ENCODE measurements at regions of chr1 and their contacts with region 1.

Region 1: DNA sequence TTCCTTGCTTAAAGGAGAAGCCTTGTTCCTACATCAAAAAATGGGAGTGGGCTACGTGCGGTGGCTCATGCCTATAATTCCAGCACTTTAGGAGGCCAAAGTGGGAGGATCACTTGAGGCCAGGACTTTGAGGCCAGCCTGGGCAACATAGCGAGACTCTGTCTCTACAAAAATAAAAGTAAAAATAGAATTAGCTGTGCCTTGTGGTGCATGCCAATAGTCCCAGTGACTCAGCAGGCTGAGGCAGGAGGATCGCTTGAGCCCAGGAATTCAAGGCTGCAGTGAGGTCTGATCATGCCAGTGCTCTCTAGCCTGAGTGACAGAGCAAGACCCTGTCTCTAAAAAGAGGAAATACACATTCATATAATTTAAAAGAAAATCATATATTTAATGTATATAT is 127.1 kb downstream of the C1orf21 start:
- DNase-seq: no peak
- ATAC-seq: peak in 6 of 8 donors; percentile 51 to 84 (median 59)
- H3K4me3 ChIP-seq: no peak overlapping the region
- H3K27ac ChIP-seq: peak overlapping the region in 4 of 10 donors; percentile 20 to 41 (median 26)
- H3K4me1 ChIP-seq: peaks cover 4 to 51% (median 42%) of the 10 kb centered on the region in 9 donors
- H3K27me3 ChIP-seq: no peaks in the 10 kb centered on the region
- CTCF ChIP-seq: no peak

Region 2: DNA sequence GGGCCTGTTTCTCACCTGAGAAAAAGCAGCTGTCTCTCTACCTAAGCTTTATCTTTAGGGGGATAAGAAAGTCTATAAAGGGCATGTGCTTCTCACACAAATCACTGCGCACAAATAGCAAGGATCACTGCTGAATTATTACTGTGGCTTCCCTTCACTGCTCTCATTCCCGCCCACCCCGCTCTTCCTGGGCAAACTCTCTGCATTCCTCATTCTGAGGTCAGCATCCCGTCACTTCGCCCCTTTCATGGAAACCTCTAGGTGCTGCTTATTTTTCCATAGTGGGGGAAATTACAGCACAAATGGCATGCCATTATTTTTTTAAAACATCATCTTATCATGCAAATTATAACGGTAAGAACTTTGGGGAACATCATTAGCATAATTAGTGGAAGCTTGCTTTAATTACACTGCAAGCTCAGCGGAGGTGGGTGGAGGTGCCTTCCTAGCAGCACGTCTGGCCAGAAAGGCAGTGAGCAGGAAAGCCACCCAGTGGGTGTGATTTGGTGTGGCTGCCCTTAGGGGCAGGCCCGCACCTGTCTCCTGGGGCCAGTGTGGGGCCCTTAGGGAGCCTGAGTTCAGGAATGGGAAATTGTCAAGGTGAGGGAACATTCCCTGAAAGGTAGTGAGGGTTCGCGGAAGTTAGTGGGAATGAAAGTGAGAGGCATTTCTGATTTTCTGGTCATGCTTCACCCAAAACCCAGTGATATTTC is 1222.0 kb before region 1 on chr1:
- intact Hi-C with region 1: loop called in 1 of 10 experiments (anchors 10 kb)
- DNase-seq: no peak
- ATAC-seq: peak in 3 of 8 donors; percentile 19 to 39 (median 32)
- H3K4me3 ChIP-seq: no peak overlapping the region
- H3K27ac ChIP-seq: peak overlapping the region in 8 of 10 donors; percentile 14 to 71 (median 55)
- H3K4me1 ChIP-seq: peaks cover 3 to 48% (median 26%) of the 10 kb centered on the region in 9 donors
- H3K27me3 ChIP-seq: no peaks in the 10 kb centered on the region
- CTCF ChIP-seq: no peak

Region 3: DNA sequence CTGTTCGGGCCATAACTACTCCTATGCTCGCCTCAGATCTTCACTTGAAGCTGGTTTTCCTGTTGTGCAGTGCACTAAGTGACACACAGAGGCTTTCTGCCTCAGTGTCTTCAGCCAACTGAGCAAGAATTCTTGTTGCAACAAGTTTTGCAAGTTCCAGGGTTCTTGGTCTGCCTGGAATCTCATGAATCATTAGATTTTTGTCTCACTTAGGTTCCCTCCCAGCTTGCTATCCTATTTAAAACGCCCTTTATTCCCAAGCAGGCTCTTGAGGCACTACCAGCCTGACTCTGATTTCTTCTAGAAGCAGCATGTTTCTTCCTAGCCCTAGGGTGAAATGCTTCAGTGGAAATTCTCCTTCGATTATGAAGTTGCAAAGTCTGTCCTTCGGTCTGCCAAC is 31.6 kb after region 1 on chr1:
- intact Hi-C with region 1: loop called in 1 of 10 experiments (anchors 5 kb)
- DNase-seq: no peak
- ATAC-seq: peak in 1 of 8 donors; percentile 48
- H3K4me3 ChIP-seq: no peak overlapping the region
- H3K27ac ChIP-seq: no peak overlapping the region
- H3K4me1 ChIP-seq: peaks cover 0 to 23% (median 12%) of the 10 kb centered on the region in 9 donors
- H3K27me3 ChIP-seq: no peaks in the 10 kb centered on the region
- CTCF ChIP-seq: no peak

Region 4: DNA sequence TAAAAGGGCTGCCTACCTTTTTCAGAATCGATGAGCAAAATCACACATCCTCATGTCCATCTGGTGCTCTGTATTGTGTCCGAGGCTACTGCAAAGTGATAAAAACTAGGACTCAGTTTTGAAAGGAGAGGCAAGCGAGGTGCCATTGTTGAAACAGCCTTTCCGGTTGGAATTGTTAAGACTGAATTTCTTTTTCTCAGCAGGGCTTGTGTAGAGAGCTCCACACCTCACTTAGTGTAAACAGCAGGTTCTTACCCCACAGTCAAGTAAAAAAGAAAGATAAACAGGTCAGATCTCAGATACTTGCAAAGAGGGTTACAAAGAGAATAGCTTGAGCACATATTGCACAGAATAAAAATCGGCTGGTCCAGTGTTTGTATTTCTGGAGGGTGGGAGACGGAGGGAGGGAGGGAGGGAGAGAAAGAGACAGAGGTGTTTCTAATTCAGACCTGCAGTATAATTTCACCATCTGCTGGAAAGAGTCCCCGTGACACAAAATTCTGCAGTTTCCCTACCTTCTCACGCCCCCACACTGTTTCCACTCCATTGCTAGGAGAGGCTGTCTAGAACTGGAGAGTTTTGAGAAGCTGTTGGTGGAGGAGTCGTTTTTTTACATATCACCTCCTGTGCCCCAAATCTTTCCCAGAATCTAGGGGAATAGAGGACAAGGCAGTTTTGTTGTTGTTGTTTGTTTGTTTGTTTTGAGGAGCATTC is 158.2 kb after region 1 on chr1:
- intact Hi-C with region 1: no loop called
- DNase-seq: no peak
- ATAC-seq: no peak
- H3K4me3 ChIP-seq: no peak overlapping the region
- H3K27ac ChIP-seq: no peak overlapping the region
- H3K4me1 ChIP-seq: no peaks in the 10 kb centered on the region
- H3K27me3 ChIP-seq: no peaks in the 10 kb centered on the region
- CTCF ChIP-seq: no peak